ENCODE measurements at regions of chr19 and their contacts with region 1.

Region 1: GRCh38 chr19:42596391-42597072 is 1.8 kb upstream of the CEACAM8 start:
- DNase-seq: peak; percentile 52
- CTCF ChIP-seq: peak; percentile 89

Region 2: GRCh38 chr19:42563352-42564210 is 33.0 kb before region 1 on chr19:
- in situ Hi-C with region 1: loop called (anchors 5 kb)
- DNase-seq: peak; percentile 71
- CTCF ChIP-seq: peak; percentile 68

Region 3: DNA sequence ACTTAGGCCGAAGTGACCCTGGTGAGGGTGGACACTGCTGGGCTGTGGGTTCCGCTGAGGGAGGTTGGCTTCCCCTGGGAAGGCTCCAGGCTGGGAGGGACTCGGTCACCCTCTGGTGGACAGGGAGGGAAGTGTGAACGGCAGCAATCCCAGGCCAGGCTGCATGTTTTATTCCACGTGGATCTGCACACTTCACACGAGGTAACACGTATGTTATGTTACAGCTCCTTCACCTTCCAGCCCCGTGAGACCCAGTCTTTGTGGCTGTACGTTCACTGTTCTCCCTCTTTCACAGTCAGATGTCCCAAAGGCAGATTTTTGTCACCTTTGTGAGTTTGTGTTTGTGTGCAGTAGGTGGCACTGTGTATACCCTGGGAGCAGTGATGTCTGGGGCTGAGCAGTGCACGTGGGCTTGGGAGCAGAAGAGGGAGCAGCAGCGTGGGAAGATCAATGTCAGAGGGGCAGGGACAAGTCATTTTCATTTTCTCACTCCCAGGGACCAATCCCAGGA is 323.0 kb after region 1 on chr19:
- in situ Hi-C with region 1: no loop called
- DNase-seq: no peak
- CTCF ChIP-seq: peak; percentile 20

Measured in GM13977 (cell line).